GM12878 (cell line): ENCODE measurements at regions of chr10 and their contacts with region 1.

Region 1: GRCh38 chr10:62528441-62528840 is 154.3 kb downstream of the ZNF365 start:
- DNase-seq: peak; percentile 79
- ATAC-seq: peak; percentile 91
- H3K4me3 ChIP-seq: no peak overlapping the region
- H3K27ac ChIP-seq: peak overlapping the region; percentile 91
- H3K4me1 ChIP-seq: peaks cover 32% of the 10 kb centered on the region
- H3K27me3 ChIP-seq: no peaks in the 10 kb centered on the region
- CTCF ChIP-seq: no peak
- EP300 ChIP-seq: peak; percentile 81 to 89
- POLR2A ChIP-seq: no peak
- RAD21 ChIP-seq: peak; percentile 23; the same call in 1 of the 2 replicates

Region 2: GRCh38 chr10:62456611-62457101 is 71.8 kb before region 1 on chr10:
- CTCF ChIA-PET with region 1: interaction called, 15 read pairs
- POLR2A ChIA-PET with region 1: interaction called, 5 read pairs
- RAD21 ChIA-PET with region 1: interaction called, 17 read pairs
- SMC1A ChIA-PET with region 1: interaction called, 14 read pairs
- in situ Hi-C with region 1: no loop called
- intact Hi-C with region 1: loop called (anchors 5 kb)
- DNase-seq: peak; percentile 86
- ATAC-seq: peak; percentile 97
- H3K4me3 ChIP-seq: no peak overlapping the region
- H3K27ac ChIP-seq: no peak overlapping the region
- H3K4me1 ChIP-seq: peaks cover 21% of the 10 kb centered on the region
- H3K27me3 ChIP-seq: peaks cover 0 to 2% of the 10 kb centered on the region in 2 experiments; a peak in 1 of 4 replicates
- CTCF ChIP-seq: no peak
- EP300 ChIP-seq: peak; percentile 90 to 96
- POLR2A ChIP-seq: no peak
- RAD21 ChIP-seq: no peak

Region 3: DNA sequence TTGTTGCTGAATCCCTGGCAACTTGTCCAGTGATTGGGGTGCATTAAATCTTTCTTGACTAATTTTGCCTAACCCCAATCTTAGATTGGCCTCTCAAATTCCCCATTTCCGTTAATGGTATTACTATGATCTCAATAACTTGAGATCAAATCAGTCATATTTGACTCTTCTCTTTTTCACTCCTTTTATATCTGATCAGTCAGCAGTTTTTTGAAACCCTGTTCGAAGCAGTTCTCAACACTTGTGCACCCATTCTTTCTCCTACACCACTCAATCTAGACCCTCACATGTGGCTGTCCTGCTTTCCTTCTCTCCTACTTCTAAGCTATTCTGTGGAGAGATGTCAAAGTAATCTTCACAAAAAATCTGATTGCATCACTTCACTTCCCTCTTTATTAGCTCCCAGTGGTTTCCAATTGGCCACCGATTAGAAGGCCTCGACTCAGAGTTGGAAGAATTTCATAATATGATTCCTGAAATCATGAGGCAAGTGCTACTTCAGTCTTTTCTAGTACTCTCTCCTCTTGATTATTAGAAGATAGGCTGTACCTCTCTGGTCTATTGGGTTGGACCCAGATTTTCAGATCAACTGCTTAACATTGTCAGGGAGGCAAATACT is 25.3 kb before region 1 on chr10:
- CTCF ChIA-PET with region 1: interaction called, 3 read pairs
- POLR2A ChIA-PET with region 1: no interaction called
- RAD21 ChIA-PET with region 1: interaction called, 7 read pairs
- SMC1A ChIA-PET with region 1: interaction called, 22 read pairs
- in situ Hi-C with region 1: no loop called
- intact Hi-C with region 1: no loop called
- DNase-seq: no peak
- ATAC-seq: no peak
- H3K4me3 ChIP-seq: no peak overlapping the region
- H3K27ac ChIP-seq: no peak overlapping the region
- H3K4me1 ChIP-seq: no peaks in the 10 kb centered on the region
- H3K27me3 ChIP-seq: peaks cover 2 to 8% of the 10 kb centered on the region in 2 experiments; a peak in 2 of 4 replicates
- CTCF ChIP-seq: no peak
- EP300 ChIP-seq: no peak
- POLR2A ChIP-seq: no peak
- RAD21 ChIP-seq: no peak

Region 4: GRCh38 chr10:62517252-62517651 is 11.2 kb before region 1 on chr10:
- CTCF ChIA-PET with region 1: interaction called, 13 read pairs
- POLR2A ChIA-PET with region 1: no interaction called
- RAD21 ChIA-PET with region 1: interaction called, 12 read pairs
- SMC1A ChIA-PET with region 1: interaction called, 13 read pairs
- in situ Hi-C with region 1: no loop called
- intact Hi-C with region 1: no loop called
- DNase-seq: no peak
- ATAC-seq: no peak
- H3K4me3 ChIP-seq: no peak overlapping the region
- H3K27ac ChIP-seq: no peak overlapping the region
- H3K4me1 ChIP-seq: no peaks in the 10 kb centered on the region
- H3K27me3 ChIP-seq: no peaks in the 10 kb centered on the region
- CTCF ChIP-seq: no peak
- EP300 ChIP-seq: no peak
- POLR2A ChIP-seq: no peak
- RAD21 ChIP-seq: no peak

Region 5: DNA sequence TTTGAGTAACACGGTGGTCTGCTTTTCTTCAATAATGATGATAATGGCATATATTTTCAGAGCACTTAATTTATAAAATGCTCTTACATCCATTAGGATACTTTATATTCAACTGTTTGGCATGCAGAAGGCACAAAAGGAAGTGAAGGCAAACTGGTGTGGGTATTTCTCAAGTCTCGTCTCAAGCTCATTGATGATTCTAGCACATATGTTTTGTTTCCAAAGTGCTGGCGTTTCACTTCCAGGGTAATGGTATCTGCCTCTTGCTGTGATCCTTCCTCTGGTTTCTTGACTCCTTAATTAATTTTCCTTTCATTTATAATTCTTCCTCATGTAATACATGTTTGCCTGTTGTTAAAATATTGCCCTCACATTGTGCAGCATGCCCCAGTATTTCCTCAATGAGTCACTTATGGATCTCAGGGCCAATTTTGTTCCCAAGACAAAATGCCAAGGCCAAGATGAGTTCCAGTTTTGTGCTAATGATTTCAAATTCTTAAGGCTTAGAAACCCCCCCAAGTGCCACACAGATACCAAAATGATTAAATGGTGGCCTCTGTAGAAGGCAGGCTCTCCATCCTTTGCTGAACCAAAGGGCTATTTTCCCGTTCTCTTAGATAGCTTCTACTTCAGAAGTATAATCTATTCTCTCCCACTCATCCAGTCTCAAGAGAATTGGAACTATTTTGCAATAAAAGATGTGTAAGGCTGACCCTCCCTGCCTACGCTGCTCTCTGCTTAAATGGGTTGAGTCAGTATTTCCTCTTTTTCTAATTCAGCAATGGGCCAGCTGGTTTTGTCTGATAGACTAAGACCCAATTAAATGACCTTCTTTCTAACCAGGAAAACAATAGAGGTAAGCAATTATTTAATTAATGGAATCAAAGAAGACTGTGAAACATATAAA is 17.0 kb after region 1 on chr10:
- CTCF ChIA-PET with region 1: interaction called, 5 read pairs
- POLR2A ChIA-PET with region 1: interaction called, 4 read pairs
- RAD21 ChIA-PET with region 1: interaction called, 30 read pairs
- SMC1A ChIA-PET with region 1: interaction called, 72 read pairs
- in situ Hi-C with region 1: no loop called
- intact Hi-C with region 1: no loop called
- DNase-seq: no peak
- ATAC-seq: no peak
- H3K4me3 ChIP-seq: no peak overlapping the region
- H3K27ac ChIP-seq: no peak overlapping the region
- H3K4me1 ChIP-seq: peaks cover 4% of the 10 kb centered on the region; the same call in 1 of the 2 replicates
- H3K27me3 ChIP-seq: no peaks in the 10 kb centered on the region
- CTCF ChIP-seq: no peak
- EP300 ChIP-seq: no peak
- POLR2A ChIP-seq: no peak
- RAD21 ChIP-seq: no peak

Region 6: DNA sequence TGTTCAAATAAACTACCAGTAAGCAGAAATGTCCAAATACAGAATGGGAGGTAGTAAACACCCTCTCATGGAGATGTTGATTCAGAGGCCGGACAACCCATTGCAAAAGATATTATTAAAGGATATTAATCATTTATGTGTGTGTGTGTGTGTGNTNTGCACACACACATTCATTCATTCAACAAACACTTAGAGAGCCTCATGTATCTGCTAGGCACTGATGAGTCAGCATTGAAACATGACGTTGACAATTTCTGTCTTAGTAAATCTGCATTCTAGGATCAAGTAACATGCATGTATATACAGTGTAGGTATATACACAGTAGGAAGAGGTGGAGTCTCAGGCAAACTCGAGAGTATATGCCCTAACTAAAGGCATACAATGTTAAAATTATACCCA is 32.7 kb after region 1 on chr10:
- CTCF ChIA-PET with region 1: interaction called, 26 read pairs
- POLR2A ChIA-PET with region 1: interaction called, 5 read pairs
- RAD21 ChIA-PET with region 1: interaction called, 18 read pairs
- SMC1A ChIA-PET with region 1: interaction called, 27 read pairs
- in situ Hi-C with region 1: no loop called
- intact Hi-C with region 1: no loop called
- DNase-seq: no peak
- ATAC-seq: no peak
- H3K4me3 ChIP-seq: no peak overlapping the region
- H3K27ac ChIP-seq: no peak overlapping the region
- H3K4me1 ChIP-seq: no peaks in the 10 kb centered on the region; the same call in 1 of the 2 replicates
- H3K27me3 ChIP-seq: peaks cover 2 to 5% of the 10 kb centered on the region in 2 experiments; a peak in 2 of 4 replicates
- CTCF ChIP-seq: no peak
- EP300 ChIP-seq: no peak
- POLR2A ChIP-seq: no peak
- RAD21 ChIP-seq: no peak

Region 7: DNA sequence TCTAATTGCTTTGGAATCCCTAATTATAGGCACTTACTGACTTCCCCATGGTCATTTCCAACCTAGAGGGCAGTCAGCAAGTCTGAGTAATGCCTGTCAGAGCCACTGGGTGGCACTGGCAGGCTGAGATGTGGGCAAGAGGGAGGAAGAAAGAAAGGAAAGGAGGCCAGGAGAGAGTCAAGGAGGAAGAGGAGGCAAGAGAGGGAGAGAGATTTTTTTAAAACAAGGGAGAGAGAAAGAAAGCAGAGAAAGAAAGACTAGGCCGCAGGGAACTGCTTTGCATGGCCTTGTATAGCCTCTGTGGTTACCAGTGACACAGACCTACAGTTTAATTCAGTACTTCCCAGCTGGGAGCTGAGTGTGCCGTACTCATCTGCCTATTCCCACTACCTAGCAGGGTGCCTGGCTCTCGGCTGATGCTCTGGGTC is 65.7 kb after region 1 on chr10:
- CTCF ChIA-PET with region 1: interaction called, 15 read pairs
- POLR2A ChIA-PET with region 1: no interaction called
- RAD21 ChIA-PET with region 1: interaction called, 5 read pairs
- SMC1A ChIA-PET with region 1: interaction called, 10 read pairs
- in situ Hi-C with region 1: no loop called
- intact Hi-C with region 1: no loop called
- DNase-seq: peak; percentile 30
- ATAC-seq: peak; percentile 94
- H3K4me3 ChIP-seq: no peak overlapping the region
- H3K27ac ChIP-seq: no peak overlapping the region
- H3K4me1 ChIP-seq: peaks cover 7% of the 10 kb centered on the region
- H3K27me3 ChIP-seq: no peaks in the 10 kb centered on the region
- CTCF ChIP-seq: peak; percentile 90 to 97 (median 95)
- EP300 ChIP-seq: no peak
- POLR2A ChIP-seq: no peak
- RAD21 ChIP-seq: peak; percentile 100

Region 8: GRCh38 chr10:62946278-62946677 is 417.8 kb after region 1 on chr10:
- CTCF ChIA-PET with region 1: no interaction called
- POLR2A ChIA-PET with region 1: no interaction called
- RAD21 ChIA-PET with region 1: no interaction called
- SMC1A ChIA-PET with region 1: no interaction called
- in situ Hi-C with region 1: no loop called
- intact Hi-C with region 1: no loop called
- DNase-seq: no peak
- ATAC-seq: no peak
- H3K4me3 ChIP-seq: no peak overlapping the region
- H3K27ac ChIP-seq: no peak overlapping the region
- H3K4me1 ChIP-seq: no peaks in the 10 kb centered on the region
- H3K27me3 ChIP-seq: no peaks in the 10 kb centered on the region
- CTCF ChIP-seq: no peak
- EP300 ChIP-seq: no peak
- POLR2A ChIP-seq: no peak
- RAD21 ChIP-seq: no peak

Region 9: GRCh38 chr10:63054889-63055611 is 526.6 kb after region 1 on chr10:
- CTCF ChIA-PET with region 1: no interaction called
- POLR2A ChIA-PET with region 1: no interaction called
- RAD21 ChIA-PET with region 1: no interaction called
- SMC1A ChIA-PET with region 1: no interaction called
- in situ Hi-C with region 1: no loop called
- intact Hi-C with region 1: no loop called
- DNase-seq: no peak
- ATAC-seq: no peak
- H3K4me3 ChIP-seq: no peak overlapping the region
- H3K27ac ChIP-seq: no peak overlapping the region
- H3K4me1 ChIP-seq: no peaks in the 10 kb centered on the region
- H3K27me3 ChIP-seq: no peaks in the 10 kb centered on the region; a peak in 1 of 4 replicates
- CTCF ChIP-seq: no peak
- EP300 ChIP-seq: no peak
- POLR2A ChIP-seq: no peak
- RAD21 ChIP-seq: no peak